Calu3 (cell line): ENCODE measurements at regions of chr5 and their contacts with region 1.

Region 1: GRCh38 chr5:160802592-160802991 is 49.4 kb downstream of the ATP10B start:
- DNase-seq: peak; percentile 19
- H3K4me3 Mint-ChIP-seq: no peak overlapping the region
- H3K27ac Mint-ChIP-seq: no peak overlapping the region
- H3K4me1 Mint-ChIP-seq: no peaks in the 10 kb centered on the region
- H3K27me3 Mint-ChIP-seq: no peaks in the 10 kb centered on the region
- CTCF ChIP-seq: no peak

Region 2: GRCh38 chr5:160747987-160748386 is 54.6 kb before region 1 on chr5:
- CTCF ChIA-PET with region 1: no interaction called
- intact Hi-C with region 1: no loop called
- DNase-seq: no peak
- H3K4me3 Mint-ChIP-seq: no peak overlapping the region
- H3K27ac Mint-ChIP-seq: no peak overlapping the region
- H3K4me1 Mint-ChIP-seq: no peaks in the 10 kb centered on the region
- H3K27me3 Mint-ChIP-seq: no peaks in the 10 kb centered on the region
- CTCF ChIP-seq: no peak

Region 3: GRCh38 chr5:160899735-160900134 is 97.1 kb after region 1 on chr5:
- CTCF ChIA-PET with region 1: no interaction called
- intact Hi-C with region 1: loop called (anchors 5 kb)
- DNase-seq: no peak
- H3K4me3 Mint-ChIP-seq: no peak overlapping the region
- H3K27ac Mint-ChIP-seq: no peak overlapping the region
- H3K4me1 Mint-ChIP-seq: no peaks in the 10 kb centered on the region
- H3K27me3 Mint-ChIP-seq: no peaks in the 10 kb centered on the region
- CTCF ChIP-seq: no peak

Region 4: DNA sequence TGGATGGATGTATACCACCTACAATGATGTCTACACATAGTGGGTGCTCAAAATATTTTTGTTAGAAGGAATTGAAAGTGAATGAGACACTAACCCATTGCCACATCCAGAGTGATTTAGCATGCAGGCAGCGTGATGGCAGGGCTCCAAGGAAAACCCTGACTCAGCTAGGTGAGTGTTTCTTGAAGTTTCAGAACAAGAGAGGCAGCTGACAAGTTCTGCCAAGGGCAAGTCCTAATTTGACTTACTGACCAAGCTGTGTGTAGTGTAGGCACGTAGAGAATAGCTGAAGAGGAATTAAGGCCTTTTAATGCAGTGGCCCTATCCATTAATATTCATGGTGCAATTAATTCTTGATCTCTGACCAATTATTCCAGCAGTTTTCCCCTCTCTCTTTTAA is 157.2 kb after region 1 on chr5:
- CTCF ChIA-PET with region 1: no interaction called
- intact Hi-C with region 1: loop called (anchors 5 kb)
- DNase-seq: peak; percentile 48
- H3K4me3 Mint-ChIP-seq: no peak overlapping the region
- H3K27ac Mint-ChIP-seq: no peak overlapping the region
- H3K4me1 Mint-ChIP-seq: no peaks in the 10 kb centered on the region
- H3K27me3 Mint-ChIP-seq: no peaks in the 10 kb centered on the region
- CTCF ChIP-seq: no peak

Region 5: DNA sequence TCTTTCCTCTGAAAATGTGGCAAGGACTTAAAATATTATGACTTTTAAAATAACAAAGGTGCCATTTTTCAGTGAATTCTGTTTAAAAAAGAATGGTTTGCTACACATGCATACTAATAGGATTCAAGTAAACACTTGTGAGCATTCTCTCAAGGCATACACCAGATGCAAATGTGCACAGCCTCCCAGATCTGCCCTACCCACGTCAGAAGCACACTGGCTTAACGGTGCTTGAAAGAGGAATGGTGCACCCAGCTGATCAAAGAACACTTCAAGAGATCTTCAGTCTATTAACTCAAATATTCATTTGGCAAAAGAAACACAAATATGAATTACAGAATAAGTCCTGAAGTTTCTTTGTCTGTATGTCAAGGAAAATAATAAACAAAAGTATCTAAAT is 728.1 kb after region 1 on chr5:
- CTCF ChIA-PET with region 1: no interaction called
- intact Hi-C with region 1: loop called (anchors 10 kb)
- DNase-seq: no peak
- H3K4me3 Mint-ChIP-seq: no peak overlapping the region
- H3K27ac Mint-ChIP-seq: no peak overlapping the region
- H3K4me1 Mint-ChIP-seq: no peaks in the 10 kb centered on the region
- H3K27me3 Mint-ChIP-seq: no peaks in the 10 kb centered on the region
- CTCF ChIP-seq: no peak